ENCODE measurements at regions of chr5 and their contacts with region 1.

Region 1: DNA sequence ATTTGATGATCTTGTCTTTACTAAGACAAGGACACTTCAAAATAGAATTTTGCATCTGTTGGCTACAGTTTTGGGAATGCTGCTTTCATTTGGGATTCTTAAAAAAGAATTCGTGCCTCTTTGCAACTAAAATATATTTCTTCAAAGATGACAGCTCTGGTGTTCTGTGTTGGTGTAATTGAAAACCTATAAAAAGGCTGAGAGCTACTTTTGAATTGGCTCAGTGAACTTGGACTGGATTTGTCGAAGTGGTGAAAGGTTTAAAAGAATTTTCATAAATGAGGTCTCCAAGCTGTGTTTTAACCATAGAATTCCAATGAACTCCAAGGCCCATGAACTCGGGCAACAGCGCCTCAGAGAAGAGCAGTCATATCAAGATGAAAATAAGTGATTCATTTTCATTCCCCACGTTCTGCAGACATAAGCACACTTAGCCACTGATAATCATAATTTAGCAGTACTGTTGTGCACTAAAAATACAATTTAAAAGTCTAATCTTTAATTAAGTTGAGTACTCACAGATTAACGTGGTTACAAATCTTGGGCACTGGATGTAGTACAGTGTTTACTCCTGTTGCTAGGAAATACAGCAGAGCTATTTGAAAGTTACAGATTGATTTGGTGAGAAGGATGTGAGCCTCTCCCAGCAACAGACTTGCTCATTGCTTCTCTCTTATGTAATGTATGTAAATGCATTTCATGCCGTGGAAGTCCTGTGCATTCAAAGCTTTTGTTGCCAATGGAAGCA is 10.9 kb downstream of the SNCAIP start:
- DNase-seq: no peak
- ATAC-seq: no peak
- H3K4me3 ChIP-seq: no peak overlapping the region
- H3K4me3 Mint-ChIP-seq: no peak overlapping the region
- H3K27ac ChIP-seq: no peak overlapping the region
- H3K27ac Mint-ChIP-seq: no peak overlapping the region
- H3K4me1 ChIP-seq: no peaks in the 10 kb centered on the region
- H3K4me1 Mint-ChIP-seq: no peaks in the 10 kb centered on the region
- H3K27me3 ChIP-seq: no peaks in the 10 kb centered on the region
- H3K27me3 Mint-ChIP-seq: peaks cover 4% of the 10 kb centered on the region
- CTCF ChIP-seq: no peak

Region 2: DNA sequence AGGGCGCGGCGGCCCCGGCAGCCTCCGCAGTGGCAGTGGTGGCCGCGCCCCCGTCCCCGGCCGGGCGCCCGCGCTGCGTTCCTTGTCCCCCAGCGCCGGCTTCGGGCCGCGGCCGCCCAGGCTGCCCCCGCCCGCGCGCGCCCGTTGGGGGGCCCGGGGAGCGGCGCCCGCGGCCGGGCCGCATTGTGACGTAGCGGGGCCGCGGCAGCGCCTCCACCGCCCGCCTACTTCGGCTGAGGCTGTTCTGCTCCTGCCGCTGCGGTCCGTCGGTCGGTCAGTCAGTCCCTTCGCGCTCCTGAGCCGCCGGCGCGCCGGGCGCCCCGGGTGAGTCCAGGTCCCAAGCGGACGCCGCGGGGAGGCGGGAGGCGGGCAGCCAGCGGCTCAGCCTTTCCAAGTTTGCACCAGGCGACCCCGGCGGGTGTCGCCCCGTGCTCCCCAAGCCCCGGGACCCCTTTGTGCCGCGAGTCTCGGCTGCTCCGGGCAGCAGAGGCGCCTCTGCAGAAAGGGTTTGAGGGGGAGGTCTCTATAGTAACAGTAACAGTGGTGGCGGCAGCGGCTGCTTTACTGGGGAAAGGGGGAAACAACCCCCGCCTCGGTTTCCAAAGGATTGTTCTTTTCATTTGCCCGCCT is 10.9 kb before region 1 on chr5 and contains the start of gene SNCAIP:
- CTCF ChIA-PET with region 1: no interaction called
- POLR2A ChIA-PET with region 1: no interaction called
- intact Hi-C with region 1: loop called in 1 of 2 experiments (anchors 1 kb)
- DNase-seq: no peak
- ATAC-seq: no peak
- H3K4me3 ChIP-seq: no peak within 1 kb of the TSS
- H3K4me3 Mint-ChIP-seq: peak within 1 kb of the TSS; percentile 27
- H3K27ac ChIP-seq: no peak within 1 kb of the TSS
- H3K27ac Mint-ChIP-seq: no peak within 1 kb of the TSS
- H3K4me1 ChIP-seq: peaks cover 3% of the 10 kb centered on the region
- H3K4me1 Mint-ChIP-seq: peaks cover 8% of the 10 kb centered on the region
- H3K27me3 ChIP-seq: peaks cover 22 to 56% of the 10 kb centered on the region in 2 experiments
- H3K27me3 Mint-ChIP-seq: peaks cover 60% of the 10 kb centered on the region
- CTCF ChIP-seq: no peak
- total RNA-seq, gene SNCAIP: not detected

Region 3: GRCh38 chr5:123033157-123033671 is 710.2 kb after region 1 on chr5:
- CTCF ChIA-PET with region 1: no interaction called
- POLR2A ChIA-PET with region 1: no interaction called
- intact Hi-C with region 1: no loop called
- DNase-seq: no peak
- ATAC-seq: no peak
- H3K4me3 ChIP-seq: no peak overlapping the region
- H3K4me3 Mint-ChIP-seq: no peak overlapping the region
- H3K27ac ChIP-seq: no peak overlapping the region
- H3K27ac Mint-ChIP-seq: no peak overlapping the region
- H3K4me1 ChIP-seq: peaks cover 19% of the 10 kb centered on the region
- H3K4me1 Mint-ChIP-seq: peaks cover 9% of the 10 kb centered on the region
- H3K27me3 ChIP-seq: peaks cover 26 to 59% of the 10 kb centered on the region in 2 experiments
- H3K27me3 Mint-ChIP-seq: peaks cover 65% of the 10 kb centered on the region
- CTCF ChIP-seq: no peak